Activated T-helper 1 cell treated with anti-CD3 and anti-CD28 coated beads, Interleukin-12 subunit alpha, Interleukin-12 subunit beta, Interleukin-2, Interleukin-4 antibody, amounts not matched to agents 30 ng/mL and 10 ng/mL and 1 ng/mL, durations not matched to agents 14 hours and 24 hours and 36 hours (primary cell): ENCODE measurements at regions of chr10 and their contacts with region 1.

Region 1: DNA sequence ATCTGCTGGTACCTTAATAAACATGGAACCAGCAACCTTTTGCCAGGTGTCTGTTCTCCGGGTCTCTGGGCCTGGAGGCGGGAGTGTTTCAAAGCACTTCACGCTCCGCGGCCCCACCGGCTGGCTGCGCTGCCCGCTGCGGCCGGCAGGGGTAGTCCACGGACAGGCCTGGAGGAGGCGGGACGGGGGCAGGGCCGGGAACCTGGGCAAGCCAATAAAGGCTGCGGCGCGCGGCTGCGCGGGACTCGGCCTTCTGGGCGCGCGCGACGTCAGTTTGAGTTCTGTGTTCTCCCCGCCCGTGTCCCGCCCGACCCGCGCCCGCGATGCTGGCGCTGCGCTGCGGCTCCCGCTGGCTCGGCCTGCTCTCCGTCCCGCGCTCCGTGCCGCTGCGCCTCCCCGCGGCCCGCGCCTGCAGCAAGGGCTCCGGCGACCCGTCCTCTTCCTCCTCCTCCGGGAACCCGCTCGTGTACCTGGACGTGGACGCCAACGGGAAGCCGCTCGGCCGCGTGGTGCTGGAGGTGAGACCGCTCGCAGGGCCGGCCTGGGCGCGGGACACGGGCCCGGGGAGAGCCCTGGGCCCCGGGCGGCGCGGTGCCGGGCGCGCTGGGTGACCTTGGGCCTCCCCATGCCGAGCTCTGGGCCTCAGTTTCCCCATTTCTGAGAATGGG is at the start of gene PPIF:
- DNase-seq: peak; percentile 95
- H3K4me3 Mint-ChIP-seq: peak within 1 kb of the TSS; percentile 95
- H3K27ac Mint-ChIP-seq: peak within 1 kb of the TSS; percentile 93
- H3K4me1 Mint-ChIP-seq: peaks cover 69% of the 10 kb centered on the region
- H3K27me3 Mint-ChIP-seq: no peaks in the 10 kb centered on the region
- total RNA-seq, gene PPIF: 155 and 157 TPM in 2 replicates

Region 2: DNA sequence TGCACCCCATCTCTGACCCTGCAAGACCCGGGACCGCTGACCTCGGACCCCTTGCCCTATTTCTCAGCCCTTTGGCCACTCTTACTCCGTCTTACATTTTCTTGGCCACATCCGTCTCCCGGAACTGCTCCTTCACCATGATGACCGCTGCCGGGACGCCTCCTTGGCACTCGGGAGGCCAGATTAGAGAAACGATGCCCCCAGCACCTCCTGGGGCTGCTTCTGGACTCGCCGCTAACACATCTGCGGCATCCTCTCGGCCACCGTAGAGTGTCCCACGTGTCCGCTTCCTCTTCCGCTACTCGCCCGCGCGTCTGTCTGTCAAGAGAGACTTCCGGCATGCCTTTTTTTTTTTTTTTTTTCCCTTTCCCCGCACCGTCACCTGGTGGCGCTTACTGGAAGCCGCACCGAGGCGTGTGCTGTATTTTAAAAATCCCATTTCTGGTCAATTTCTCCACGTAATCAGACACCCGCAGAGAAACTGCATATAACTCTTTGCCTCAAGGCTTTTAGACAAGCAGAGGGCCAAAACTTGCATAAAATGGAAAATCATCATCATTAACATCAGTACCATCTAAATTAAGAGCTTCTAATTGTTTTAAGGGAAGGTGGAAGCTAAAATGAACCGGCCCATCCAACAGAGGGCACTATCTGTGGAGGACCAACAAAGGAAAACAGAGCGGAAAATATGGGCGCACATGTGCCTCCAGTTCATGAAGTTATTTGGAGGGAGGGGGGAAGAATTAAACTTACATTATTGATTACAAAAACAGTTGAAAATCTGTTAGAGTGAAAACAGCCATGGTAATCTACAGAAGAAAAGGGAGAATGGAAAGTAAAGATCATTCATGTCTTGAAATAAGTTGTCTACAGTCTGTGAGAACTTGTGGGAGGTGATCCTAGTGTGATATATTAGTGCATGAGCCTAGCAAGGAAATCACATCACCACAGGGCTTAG is 1317.8 kb before region 1 on chr10 and contains the start of gene POLR3A:
- intact Hi-C with region 1: loop called (anchors 1 kb)
- DNase-seq: peak; percentile 89
- H3K4me3 Mint-ChIP-seq: peak within 1 kb of the TSS; percentile 99
- H3K27ac Mint-ChIP-seq: peak within 1 kb of the TSS; percentile 91
- H3K4me1 Mint-ChIP-seq: peaks cover 28% of the 10 kb centered on the region
- H3K27me3 Mint-ChIP-seq: no peaks in the 10 kb centered on the region
- total RNA-seq, gene POLR3A: 29.5 and 30.8 TPM in 2 replicates

Region 3: GRCh38 chr10:79286318-79286951 is 60.9 kb before region 1 on chr10:
- intact Hi-C with region 1: loop called (anchors 1 kb)
- DNase-seq: peak; percentile 65
- H3K4me3 Mint-ChIP-seq: peak overlapping the region; percentile 71
- H3K27ac Mint-ChIP-seq: peak overlapping the region; percentile 89
- H3K4me1 Mint-ChIP-seq: peaks cover 61% of the 10 kb centered on the region
- H3K27me3 Mint-ChIP-seq: no peaks in the 10 kb centered on the region

Region 4: GRCh38 chr10:79316671-79317431 is 30.5 kb before region 1 on chr10:
- intact Hi-C with region 1: loop called (anchors 1 kb)
- DNase-seq: peak; percentile 34
- H3K4me3 Mint-ChIP-seq: peak overlapping the region; percentile 65
- H3K27ac Mint-ChIP-seq: peak overlapping the region; percentile 95
- H3K4me1 Mint-ChIP-seq: peaks cover 71% of the 10 kb centered on the region
- H3K27me3 Mint-ChIP-seq: no peaks in the 10 kb centered on the region

Region 5: GRCh38 chr10:79445141-79445976 is 98.0 kb after region 1 on chr10 and contains the start of gene ZCCHC24:
- intact Hi-C with region 1: loop called (anchors 1 kb)
- DNase-seq: peak; percentile 91
- H3K4me3 Mint-ChIP-seq: peak within 1 kb of the TSS; percentile 87
- H3K27ac Mint-ChIP-seq: peak within 1 kb of the TSS; percentile 68
- H3K4me1 Mint-ChIP-seq: peaks cover 21% of the 10 kb centered on the region
- H3K27me3 Mint-ChIP-seq: peaks cover 56% of the 10 kb centered on the region
- total RNA-seq, gene ZCCHC24: 0.52 and 0.59 TPM in 2 replicates